Aorta (tissue), 5 donors: ENCODE measurements at regions of chr16 and their contacts with region 1.

Region 1: DNA sequence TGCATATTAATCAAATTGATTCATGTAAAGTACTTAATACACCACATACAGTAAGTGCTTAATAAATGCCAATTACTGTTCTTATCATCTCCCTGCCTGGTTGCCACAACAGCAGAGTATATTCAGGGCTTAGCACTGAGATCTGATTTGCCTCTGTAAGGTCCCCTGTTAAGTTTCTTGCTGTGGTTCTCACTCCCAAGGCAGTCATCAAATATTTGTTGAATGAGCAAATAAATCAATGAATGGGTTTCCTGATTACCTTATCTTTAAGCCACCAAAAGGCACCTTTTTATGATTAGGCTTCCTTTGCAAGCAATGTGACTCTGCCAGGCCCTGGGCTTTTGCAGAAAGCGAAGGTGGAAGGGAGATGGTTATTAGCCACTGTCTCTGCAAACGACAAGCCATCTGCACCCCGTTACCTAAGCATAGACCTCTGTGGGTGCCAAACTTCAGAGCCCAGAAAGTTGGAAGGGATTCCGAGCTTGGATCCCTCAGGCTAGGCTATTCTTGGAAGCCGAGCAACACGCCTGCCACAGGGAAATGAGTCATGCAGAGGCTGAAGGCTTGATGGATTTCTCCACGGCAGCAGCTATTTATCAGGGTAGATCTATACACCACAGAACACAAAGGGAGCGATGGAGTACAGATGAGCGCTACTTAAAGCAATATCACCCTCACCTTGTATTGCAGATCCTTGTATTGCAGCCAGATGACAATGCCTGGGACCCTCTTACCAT is 102.0 kb downstream of the GRIN2A start:
- DNase-seq: peak; percentile 72 to 78
- ATAC-seq: peak; percentile 87
- H3K4me3 ChIP-seq: no peak overlapping the region
- H3K27ac ChIP-seq: peak overlapping the region in 1 of 2 donors; percentile 85
- H3K4me1 ChIP-seq: peaks cover 0 to 5% of the 10 kb centered on the region in 2 donors
- H3K27me3 ChIP-seq: no peaks in the 10 kb centered on the region

Region 2: GRCh38 chr16:9845661-9846361 is 234.4 kb before region 1 on chr16:
- intact Hi-C with region 1: no loop called
- DNase-seq: no peak
- ATAC-seq: no peak
- H3K4me3 ChIP-seq: no peak overlapping the region
- H3K27ac ChIP-seq: no peak overlapping the region
- H3K4me1 ChIP-seq: no peaks in the 10 kb centered on the region
- H3K27me3 ChIP-seq: no peaks in the 10 kb centered on the region

Region 3: DNA sequence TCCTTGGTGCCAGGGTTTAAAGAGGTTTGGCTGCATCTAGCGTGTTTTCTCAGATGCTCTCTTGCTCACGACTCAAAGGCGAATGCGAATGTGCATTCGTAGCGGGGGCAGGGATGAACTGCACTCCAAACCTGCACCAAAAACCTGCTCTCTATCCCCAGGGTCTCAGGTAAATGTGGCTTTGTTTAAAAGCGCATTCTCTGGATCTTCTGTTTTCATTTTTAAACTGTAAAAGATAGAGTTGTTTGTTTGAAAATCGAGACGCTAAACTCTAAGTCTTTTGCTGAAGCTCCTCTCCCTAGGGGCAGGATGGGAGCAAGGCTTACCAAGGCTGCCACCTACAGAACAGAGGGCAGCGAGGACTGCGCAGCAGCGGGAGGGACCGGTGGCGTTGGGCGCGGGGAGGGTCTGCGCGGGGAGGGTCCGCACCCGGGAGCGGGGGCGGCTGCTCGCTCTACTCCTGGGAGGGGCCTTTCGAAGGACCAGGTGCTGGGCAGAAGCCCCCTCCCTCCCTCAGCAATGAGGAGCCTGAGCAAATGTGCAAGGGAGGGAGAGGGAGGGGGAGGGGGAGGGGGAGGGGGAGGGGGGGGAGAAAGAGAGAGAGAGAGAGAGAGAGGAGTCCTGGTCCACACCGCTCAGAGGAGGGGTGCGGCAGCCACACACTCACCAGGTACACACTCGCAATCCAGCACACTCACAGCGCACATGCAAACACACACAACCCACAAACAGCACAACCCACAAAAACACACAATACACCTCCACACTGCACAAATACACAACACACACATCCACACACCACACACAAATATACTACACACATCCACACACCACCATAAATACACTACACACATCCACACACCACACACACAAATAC is 40.7 kb before region 1 on chr16:
- intact Hi-C with region 1: no loop called
- DNase-seq: no peak
- ATAC-seq: peak; percentile 67
- H3K4me3 ChIP-seq: peak overlapping the region in 1 of 2 donors; percentile 29
- H3K27ac ChIP-seq: no peak overlapping the region
- H3K4me1 ChIP-seq: no peaks in the 10 kb centered on the region
- H3K27me3 ChIP-seq: no peaks in the 10 kb centered on the region

Region 4: DNA sequence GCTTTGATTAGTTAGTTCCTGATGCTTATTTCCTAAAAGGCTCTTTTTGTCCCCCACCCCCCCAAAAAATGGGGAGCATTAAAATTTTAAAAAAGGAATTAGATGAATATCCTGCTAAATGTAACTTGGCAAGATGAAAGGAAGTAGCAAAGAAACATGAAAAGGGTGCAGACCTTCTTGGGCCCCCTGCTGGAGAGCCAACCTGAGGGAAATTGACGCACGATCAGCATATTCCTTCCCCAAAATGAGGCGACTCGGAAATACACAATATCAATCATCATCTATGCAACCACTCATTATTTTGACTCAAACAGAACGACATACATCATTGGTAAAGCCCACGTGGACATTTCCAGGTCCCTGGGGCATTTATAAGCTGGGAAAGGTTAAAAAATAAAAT is 42.3 kb after region 1 on chr16:
- intact Hi-C with region 1: loop called in 1 of 2 experiments (anchors 5 kb)
- DNase-seq: no peak
- ATAC-seq: no peak
- H3K4me3 ChIP-seq: no peak overlapping the region
- H3K27ac ChIP-seq: no peak overlapping the region
- H3K4me1 ChIP-seq: peaks cover 0 to 2% of the 10 kb centered on the region in 2 donors
- H3K27me3 ChIP-seq: no peaks in the 10 kb centered on the region